Colonic mucosa (tissue), 4 donors: ENCODE measurements at regions of chr16 and their contacts with region 1.

Region 1: DNA sequence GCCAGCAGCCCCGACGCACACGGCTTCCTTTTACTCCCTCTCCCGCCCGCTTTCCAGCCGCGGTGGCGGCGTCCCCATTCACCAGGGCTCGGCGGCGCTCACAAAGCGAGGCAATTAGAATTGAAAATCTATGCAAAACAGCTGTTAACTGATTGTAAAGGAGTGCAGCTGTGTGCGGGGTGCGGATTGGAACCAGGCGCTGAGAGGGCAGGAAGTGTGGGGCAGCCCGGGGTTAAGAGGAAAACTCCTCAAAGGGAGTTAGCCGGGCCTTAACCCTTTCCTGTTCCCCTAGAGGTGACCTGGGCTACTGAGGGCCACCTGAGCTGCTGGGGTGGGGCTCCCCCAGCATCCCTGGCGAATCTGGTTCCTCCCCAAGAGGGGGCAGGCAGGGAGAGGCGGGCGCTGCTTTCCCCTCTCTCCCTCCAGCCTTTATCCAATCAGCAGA is 5.8 kb upstream of the GSE1 start:
- DNase-seq: peak; percentile 52
- H3K4me3 ChIP-seq: no peak overlapping the region
- H3K27ac ChIP-seq: peak overlapping the region; percentile 66
- H3K4me1 ChIP-seq: peaks cover 29% of the 10 kb centered on the region
- H3K27me3 ChIP-seq: no peaks in the 10 kb centered on the region
- CTCF ChIP-seq: no peak

Region 2: DNA sequence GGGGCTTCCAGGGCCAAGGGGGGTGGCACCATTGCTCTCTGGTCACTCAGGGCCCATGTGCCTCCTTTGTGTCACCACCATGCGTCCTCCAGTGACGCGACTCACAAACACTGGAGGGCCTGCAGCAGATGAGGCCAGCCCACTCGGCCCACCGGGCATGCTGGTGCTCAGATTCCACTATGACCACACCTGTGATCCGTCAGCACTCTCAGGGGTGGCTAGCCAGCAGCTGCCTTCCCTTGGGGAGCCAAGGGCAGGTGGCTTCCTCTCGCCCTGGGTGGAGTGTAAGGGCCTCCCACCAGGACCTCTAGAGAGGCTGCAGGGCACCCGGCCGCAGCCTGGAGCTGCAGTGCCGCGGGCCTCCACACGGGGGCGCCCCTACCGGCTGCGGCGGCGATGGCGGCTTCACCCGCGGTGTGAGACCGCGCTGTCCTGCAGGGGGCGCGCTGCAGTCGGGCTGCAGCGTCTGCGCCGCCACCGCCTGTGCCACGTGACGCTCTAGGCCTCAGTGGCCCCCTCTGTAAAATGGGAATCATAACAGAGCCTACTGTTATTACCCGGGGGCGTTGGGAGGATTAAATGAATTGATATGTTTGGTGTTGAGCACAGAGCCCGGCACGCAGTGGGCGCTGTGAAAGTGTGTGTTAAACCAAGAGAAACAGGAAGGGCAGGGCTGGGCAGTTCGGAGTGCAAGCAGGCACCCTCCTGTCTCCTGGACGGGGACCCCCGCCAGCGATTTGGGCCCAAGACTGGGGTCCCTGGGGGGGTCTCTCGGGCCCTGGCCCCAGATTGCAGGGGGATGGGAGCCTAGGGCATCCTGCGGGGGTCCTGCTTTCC is 186.6 kb before region 1 on chr16:
- intact Hi-C with region 1: loop called (anchors 5 kb)
- DNase-seq: peak; percentile 65
- H3K4me3 ChIP-seq: no peak overlapping the region
- H3K27ac ChIP-seq: no peak overlapping the region
- H3K4me1 ChIP-seq: peaks cover 16% of the 10 kb centered on the region
- H3K27me3 ChIP-seq: no peaks in the 10 kb centered on the region
- CTCF ChIP-seq: peak; percentile 100

Region 3: DNA sequence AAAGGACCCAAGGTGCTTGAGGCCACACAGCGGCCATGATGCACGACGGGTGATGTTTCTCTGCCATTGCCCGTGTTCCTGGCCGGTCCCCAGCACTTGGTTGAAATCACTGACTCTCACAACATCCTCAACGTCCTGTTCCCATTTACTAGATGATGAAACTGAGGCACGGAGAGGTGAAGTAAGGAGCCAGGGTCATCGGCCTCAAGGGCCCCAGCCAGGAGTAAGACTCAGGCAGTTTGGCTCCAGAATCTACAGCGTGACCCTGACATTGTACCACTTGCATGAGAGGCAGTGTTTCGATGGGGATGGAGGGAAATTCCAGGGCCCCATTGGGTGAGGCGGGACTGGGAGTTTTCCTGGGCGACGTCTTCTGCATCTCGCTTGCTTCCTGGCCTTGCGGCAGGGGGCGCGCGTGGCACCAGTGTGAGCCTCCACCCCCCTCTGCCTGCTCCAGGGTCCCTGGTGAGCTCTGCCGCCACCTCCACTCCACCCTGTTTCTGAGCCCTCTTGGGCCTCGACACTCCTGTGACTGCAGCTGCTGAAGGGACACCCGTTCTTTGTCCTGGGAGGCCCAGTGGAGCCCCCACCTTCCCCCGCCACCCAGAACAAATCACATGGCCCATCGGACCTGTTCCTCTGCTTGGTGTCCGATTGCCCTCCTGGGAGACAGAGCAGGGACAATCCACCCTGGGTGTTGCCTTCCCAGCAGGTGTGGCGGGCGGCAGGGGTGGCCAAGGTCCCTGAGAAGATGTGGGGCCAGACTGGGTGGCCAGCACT is 127.2 kb before region 1 on chr16:
- intact Hi-C with region 1: loop called (anchors 10 kb)
- DNase-seq: peak; percentile 72
- H3K4me3 ChIP-seq: no peak overlapping the region
- H3K27ac ChIP-seq: peak overlapping the region; percentile 17
- H3K4me1 ChIP-seq: peaks cover 6% of the 10 kb centered on the region
- H3K27me3 ChIP-seq: no peaks in the 10 kb centered on the region
- CTCF ChIP-seq: peak; percentile 47

Region 4: DNA sequence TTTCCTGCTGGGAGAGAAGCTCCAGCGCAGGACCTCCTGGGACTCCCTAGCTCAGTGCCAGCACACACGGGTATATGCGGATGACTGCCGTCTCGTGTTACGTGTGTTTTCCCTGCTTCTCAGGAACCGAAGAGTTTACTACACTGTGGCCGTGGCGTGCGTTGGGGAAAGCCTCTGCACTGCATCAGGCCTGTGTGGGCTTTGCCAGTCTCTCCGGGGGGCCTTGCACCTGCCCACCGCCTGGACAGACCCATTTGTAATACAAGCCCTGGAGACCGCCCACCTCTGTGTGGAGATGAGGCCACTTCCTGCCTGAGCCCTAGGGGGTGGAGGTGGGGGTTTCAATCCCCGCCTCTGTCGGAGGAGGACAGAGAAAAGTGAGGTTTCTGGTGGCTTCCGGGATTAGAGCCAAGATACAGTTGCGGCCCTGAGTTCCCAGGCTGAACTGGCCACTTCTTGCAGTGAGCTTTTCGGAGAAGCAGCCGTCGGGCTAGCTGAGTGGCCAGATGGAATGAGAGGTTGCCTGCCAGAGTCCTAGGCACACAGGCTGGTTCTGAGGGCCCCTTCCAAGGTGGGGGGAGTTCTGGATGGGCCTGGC is 37.6 kb before region 1 on chr16:
- intact Hi-C with region 1: loop called (anchors 5 kb)
- DNase-seq: no peak
- H3K4me3 ChIP-seq: no peak overlapping the region
- H3K27ac ChIP-seq: no peak overlapping the region
- H3K4me1 ChIP-seq: peaks cover 55% of the 10 kb centered on the region
- H3K27me3 ChIP-seq: no peaks in the 10 kb centered on the region
- CTCF ChIP-seq: no peak

Region 5: GRCh38 chr16:85659805-85660495 is 52.6 kb after region 1 on chr16:
- intact Hi-C with region 1: no loop called
- DNase-seq: peak; percentile 67
- H3K4me3 ChIP-seq: no peak overlapping the region
- H3K27ac ChIP-seq: no peak overlapping the region
- H3K4me1 ChIP-seq: no peaks in the 10 kb centered on the region
- H3K27me3 ChIP-seq: no peaks in the 10 kb centered on the region
- CTCF ChIP-seq: peak; percentile 95